ENCODE measurements at regions of chr17 and their contacts with region 1.

Region 1: DNA sequence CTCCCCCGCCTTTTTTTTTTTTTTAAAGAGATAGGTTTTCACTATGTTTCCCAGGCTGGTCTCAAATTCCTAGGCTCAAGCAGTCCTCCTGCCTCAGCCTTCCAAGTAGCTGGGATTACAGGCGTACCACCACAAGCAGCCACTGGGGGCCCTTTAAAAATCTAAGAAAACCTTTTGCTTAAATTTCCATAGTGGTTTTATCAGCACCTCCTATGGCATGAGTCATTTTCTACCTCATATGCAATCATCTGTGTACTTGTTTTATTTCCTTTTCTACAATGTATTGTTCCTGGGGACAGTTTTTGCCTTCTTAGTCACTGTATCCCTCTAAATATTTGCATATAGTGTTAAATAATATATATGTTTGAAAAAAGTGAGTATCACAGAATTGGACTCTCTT is 29.2 kb downstream of the GNA13 start:
- DNase-seq: peak in 11 of 14 experiments; percentile 21 to 82 (median 42)
- ATAC-seq: peak; percentile 77
- H3K4me3 ChIP-seq: no peak overlapping the region
- H3K4me3 Mint-ChIP-seq: peak overlapping the region; percentile 81
- H3K27ac ChIP-seq: no peak overlapping the region
- H3K27ac Mint-ChIP-seq: peak overlapping the region; percentile 61
- H3K4me1 ChIP-seq: peaks cover 48% of the 10 kb centered on the region
- H3K4me1 Mint-ChIP-seq: peaks cover 94% of the 10 kb centered on the region
- H3K27me3 ChIP-seq: no peaks in the 10 kb centered on the region
- H3K27me3 Mint-ChIP-seq: no peaks in the 10 kb centered on the region
- CTCF ChIP-seq: peak; percentile 29

Region 2: DNA sequence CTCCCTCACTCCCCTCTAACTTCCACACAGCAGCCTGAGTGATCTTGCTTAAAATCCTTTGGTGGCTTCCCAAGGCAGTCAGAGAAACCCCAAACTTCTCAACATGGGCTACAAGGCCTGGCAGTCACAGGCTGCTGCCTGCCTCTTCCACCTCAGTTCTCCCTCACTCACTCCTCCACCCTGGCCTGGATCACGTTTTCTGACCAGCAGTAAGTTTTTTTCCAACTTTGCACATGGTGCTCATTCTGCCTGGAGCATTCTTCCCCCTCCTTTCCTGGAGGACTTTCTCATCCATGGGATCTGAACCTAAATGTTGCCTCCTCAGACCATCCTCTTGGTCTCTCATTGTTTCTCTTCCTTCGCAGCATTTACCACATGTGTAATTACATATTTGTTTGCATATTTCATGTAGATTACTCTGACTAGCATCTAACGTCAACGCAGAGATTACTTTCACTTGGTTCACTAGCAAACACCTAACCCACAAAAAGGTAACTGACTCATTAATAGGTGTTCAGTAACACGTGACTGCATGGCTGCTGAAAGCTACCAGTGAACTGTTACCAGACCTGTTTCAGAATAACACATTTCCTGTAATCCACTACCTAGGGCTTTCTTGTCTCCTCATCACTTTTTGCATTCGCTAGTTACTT is 12.2 kb after region 1 on chr17:
- CTCF ChIA-PET with region 1: interaction called, 6 read pairs
- POLR2A ChIA-PET with region 1: interaction called, 9 read pairs
- intact Hi-C with region 1: loop called in 1 of 2 experiments (anchors 1 kb)
- DNase-seq: peak in 13 of 14 experiments; percentile 20 to 92 (median 47)
- ATAC-seq: peak; percentile 90
- H3K4me3 ChIP-seq: peak overlapping the region; percentile 28
- H3K4me3 Mint-ChIP-seq: peak overlapping the region; percentile 55
- H3K27ac ChIP-seq: peak overlapping the region; percentile 74 to 81
- H3K27ac Mint-ChIP-seq: peak overlapping the region; percentile 89
- H3K4me1 ChIP-seq: peaks cover 75% of the 10 kb centered on the region
- H3K4me1 Mint-ChIP-seq: peaks cover 81% of the 10 kb centered on the region
- H3K27me3 ChIP-seq: no peaks in the 10 kb centered on the region
- H3K27me3 Mint-ChIP-seq: no peaks in the 10 kb centered on the region
- CTCF ChIP-seq: no peak

Region 3: DNA sequence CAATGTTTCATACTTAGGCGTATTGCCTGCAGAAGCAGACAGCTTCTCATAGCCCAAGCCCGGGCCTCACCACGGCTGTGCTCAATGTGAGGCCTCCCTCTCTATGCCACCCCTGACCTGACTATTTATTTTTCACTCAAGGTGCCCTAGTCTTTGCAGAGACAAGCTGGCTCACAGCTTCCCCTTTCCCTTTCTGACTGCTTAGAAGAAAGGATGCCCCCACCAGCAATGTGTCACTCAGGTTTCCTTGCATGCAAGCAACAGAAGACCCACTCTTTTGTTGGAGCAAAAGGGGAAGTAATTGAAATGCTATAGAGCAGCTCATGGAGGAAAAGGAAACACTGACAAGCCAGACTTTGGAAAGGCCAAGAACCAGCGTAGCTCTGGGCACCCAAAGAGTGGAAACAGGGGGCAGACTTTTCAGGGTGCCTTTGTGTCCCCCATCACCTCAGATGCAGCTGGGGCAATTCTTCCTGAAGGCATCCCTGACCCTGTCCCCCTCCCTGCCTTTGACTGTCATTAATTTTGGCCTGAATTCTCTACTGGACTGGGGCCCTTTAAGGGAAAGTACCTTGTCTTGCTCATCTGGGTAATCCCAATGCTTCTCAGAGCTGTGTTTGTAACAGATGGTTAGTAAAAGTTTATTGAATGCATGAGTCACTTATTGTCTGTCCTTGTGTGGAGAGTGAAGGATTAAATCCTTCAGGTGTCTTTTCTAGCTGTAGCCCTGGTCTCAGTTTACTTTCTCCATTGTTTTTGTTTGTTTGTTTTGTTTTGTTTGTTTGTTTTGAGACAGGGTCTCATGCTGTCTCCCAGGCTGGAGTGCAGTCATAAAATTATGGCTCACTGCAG is 127.7 kb after region 1 on chr17:
- CTCF ChIA-PET with region 1: no interaction called
- POLR2A ChIA-PET with region 1: no interaction called
- intact Hi-C with region 1: no loop called
- DNase-seq: peak in 2 of 14 experiments; percentile 36 to 49
- ATAC-seq: no peak
- H3K4me3 ChIP-seq: no peak overlapping the region
- H3K4me3 Mint-ChIP-seq: no peak overlapping the region
- H3K27ac ChIP-seq: no peak overlapping the region
- H3K27ac Mint-ChIP-seq: no peak overlapping the region
- H3K4me1 ChIP-seq: no peaks in the 10 kb centered on the region
- H3K4me1 Mint-ChIP-seq: no peaks in the 10 kb centered on the region
- H3K27me3 ChIP-seq: no peaks in the 10 kb centered on the region
- H3K27me3 Mint-ChIP-seq: no peaks in the 10 kb centered on the region
- CTCF ChIP-seq: no peak